ENCODE measurements at regions of chr5 and their contacts with region 1.

Region 1: DNA sequence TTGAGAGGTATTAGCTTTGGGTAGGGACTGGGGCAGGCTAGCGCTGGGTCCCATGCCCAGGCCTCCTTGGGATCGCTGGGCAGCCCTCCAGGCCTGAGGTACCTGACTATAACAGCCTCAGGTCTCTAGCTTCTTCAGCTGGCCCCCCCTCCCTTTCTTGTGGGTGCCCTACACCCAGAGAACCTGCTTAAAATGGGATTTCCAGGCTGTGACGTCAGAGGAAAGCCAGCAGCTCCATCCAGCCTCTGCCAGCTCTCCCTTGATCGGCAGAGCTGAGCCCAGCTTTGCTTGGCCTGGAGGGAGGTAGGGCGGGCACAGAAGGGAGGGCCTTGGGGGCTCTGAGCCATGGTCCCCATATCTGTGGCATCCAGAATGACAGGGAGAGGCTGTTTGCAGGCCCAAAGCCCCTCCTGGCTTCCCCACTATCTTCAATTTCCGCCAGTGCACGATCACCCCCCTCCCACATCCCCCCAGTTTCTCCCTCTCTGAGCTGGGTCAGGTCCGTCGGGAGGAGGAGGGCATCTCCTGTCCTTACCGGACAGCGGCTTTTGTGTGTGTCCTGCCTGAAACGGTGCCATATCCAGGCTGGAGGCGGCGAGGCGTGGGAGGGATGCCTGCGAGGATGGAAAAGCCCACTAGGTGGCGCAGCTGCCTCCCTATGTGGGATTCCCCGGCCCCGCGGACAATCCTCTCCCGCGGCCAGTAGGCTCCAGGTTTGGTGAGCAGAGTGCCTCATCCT is 10.8 kb downstream of the REEP2 start:
- H3K4me3 ChIP-seq: no peak overlapping the region
- H3K27ac ChIP-seq: no peak overlapping the region
- H3K4me1 ChIP-seq: 0 out of 2 replicates have a peak, but pooled peaks cover 2% of the 10 kb centered on the region
- CTCF ChIP-seq: peak; percentile 96

Region 2: DNA sequence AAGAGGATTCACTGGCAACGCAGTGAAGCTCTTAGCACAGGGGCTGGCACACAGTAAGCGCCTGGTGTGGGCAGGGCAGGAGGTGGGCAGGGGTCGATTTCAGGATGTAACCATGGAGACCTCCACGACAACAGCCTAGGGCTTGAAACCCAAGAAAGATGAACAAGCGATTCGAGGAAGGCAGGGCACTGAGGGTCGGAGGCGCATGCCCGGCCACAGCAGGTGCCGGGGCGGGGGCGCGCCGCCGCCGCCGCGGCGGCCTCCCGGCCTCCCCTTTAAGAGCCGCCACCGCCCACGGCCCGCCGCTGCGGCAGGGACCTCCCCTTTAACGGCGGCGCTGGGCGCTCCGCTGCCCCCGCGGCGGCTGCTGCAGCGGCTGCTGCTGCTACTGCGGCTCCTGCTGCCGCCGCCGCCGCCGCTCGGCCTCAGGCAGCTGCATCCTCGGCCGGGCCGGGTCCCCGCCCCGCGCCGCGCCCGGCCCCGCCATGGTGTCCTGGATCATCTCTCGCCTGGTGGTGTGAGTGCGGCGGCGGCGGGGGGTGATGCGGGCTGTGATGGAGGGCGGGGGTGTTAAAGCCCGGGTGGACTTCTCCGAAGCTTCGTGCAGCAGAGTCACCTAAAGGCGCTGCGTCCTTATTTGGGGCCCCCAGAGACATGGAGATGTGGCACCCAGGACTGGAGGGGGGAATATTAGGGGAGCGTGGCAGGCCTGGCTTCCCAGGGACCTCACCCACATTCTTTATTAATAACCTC is 10.8 kb before region 1 on chr5 and contains the start of gene REEP2:
- CTCF ChIA-PET with region 1: interaction called, 24 read pairs
- POLR2A ChIA-PET with region 1: no interaction called
- H3K4me3 ChIP-seq: peak within 1 kb of the TSS; percentile 60
- H3K27ac ChIP-seq: peak within 1 kb of the TSS; percentile 68; the same call in 1 of the 2 replicates
- H3K4me1 ChIP-seq: peaks cover 8% of the 10 kb centered on the region; the same call in 1 of the 2 replicates
- CTCF ChIP-seq: no peak

Region 3: GRCh38 chr5:138464008-138464387 is 14.3 kb after region 1 on chr5:
- CTCF ChIA-PET with region 1: interaction called, 57 read pairs
- POLR2A ChIA-PET with region 1: interaction called, 21 read pairs
- H3K4me3 ChIP-seq: peak overlapping the region; percentile 88
- H3K27ac ChIP-seq: peak overlapping the region; percentile 94
- H3K4me1 ChIP-seq: peaks cover 4% of the 10 kb centered on the region; the same call in 1 of the 2 replicates
- CTCF ChIP-seq: peak; percentile 97

Region 4: DNA sequence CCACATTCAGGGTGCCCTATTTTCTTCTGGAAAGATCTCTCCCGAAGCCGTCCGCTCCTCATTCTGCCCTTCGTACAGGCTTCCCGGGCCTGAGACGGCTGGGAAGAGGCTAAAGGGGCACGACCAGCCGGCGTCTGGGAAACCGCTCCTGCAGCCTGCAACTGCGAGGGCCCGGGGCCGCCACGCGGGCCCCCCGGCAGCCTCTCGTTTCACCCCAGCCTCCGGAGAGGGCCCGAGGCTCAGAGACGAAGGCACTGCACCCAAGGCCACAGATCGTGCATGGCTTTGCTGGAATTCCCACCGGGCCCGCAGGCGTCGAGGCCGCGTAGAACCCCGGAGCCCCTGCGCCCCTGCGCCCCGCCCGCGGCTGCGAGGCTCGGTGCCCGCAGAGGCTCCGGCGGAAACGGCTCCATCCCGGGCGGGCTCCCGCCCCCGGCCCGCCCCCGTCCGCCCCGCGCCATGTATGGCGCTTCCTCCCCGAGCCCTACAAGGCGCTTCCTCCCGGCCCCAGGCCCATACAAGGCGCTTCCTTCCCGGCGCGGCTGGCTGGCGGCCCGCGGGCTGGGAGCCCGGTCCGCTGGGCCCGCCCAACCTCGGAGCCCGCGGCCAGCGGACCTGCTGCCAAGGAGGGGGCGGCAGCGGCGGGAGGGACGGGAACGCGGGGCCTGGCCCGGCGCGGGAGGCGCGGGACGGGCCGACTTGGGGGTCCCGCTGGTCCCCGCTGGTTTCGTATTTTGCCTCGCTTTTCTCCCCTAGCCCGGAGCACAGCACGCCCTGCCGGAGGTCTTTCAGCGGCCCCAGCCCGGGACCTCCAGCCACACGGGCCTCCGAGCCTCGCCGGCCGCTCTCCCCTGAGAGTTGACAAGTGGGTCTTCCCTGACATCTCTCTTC is 42.2 kb after region 1 on chr5:
- CTCF ChIA-PET with region 1: interaction called, 38 read pairs
- POLR2A ChIA-PET with region 1: no interaction called
- H3K4me3 ChIP-seq: peak overlapping the region; percentile 47
- H3K27ac ChIP-seq: peak overlapping the region; percentile 64
- H3K4me1 ChIP-seq: peaks cover 8% of the 10 kb centered on the region
- CTCF ChIP-seq: peak; percentile 20; the same call in 1 of the 2 replicates

Region 5: DNA sequence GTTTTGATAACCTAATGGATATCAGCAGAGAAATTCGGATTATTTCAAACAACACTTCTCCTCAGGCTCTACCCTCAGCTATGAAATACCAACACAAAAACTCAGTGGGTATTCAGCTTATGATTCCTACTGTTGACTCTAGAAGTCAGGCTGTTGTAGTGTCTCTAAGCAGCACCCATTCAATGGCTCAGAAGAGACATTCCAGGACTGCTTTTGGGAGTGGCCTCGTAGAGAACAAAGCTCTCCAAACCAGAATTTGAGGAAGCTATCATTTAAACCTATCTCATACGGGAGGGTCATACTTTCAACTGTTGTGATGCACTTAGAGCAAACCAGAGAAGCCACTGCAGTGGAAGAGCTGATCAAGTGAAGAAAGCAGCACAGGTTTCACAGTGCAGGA is 59.3 kb after region 1 on chr5:
- CTCF ChIA-PET with region 1: interaction called, 110 read pairs
- POLR2A ChIA-PET with region 1: interaction called, 4 read pairs
- H3K4me3 ChIP-seq: no peak overlapping the region
- H3K27ac ChIP-seq: no peak overlapping the region
- H3K4me1 ChIP-seq: no peaks in the 10 kb centered on the region
- CTCF ChIP-seq: no peak

Region 6: DNA sequence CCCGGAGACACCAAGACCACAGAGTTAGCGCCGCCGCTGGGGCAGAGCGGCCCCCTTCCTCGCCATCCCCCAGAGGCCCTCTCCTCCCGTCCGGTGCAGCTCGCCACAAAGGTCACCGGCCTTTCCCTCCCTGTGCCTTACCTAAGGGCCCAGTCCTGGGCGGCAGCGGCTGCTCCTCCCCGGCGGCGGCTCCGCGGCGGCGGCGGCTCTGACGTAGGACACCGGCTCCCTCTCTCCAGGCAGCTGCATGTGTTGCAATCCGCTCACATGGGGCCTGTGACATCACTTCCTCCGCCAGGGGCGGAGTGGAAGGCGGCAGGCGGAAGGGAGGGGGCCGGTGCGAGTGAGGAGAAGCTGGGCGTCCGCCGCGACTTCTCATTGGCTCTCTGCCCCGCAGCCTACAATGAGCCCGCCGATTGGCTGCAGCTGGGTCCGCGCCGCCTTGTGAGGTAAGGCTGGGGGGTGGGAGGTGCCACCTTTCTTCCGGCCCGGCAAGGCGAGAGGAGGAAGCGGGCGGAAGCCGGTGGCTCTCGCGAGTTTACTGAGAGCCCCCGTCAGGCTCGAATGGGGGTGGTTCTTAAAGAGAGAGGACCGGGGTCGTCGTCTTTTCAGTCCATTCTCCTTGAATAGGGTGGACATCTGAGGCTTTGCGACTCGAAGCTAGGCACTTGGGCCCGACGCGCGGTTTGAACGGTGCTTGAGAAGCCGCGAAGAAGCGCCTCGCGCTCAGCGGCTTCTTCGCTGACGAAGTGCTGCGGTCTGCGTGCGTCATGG is 93.5 kb after region 1 on chr5 and contains the start of gene ETF1:
- CTCF ChIA-PET with region 1: interaction called, 45 read pairs
- POLR2A ChIA-PET with region 1: no interaction called
- H3K4me3 ChIP-seq: peak within 1 kb of the TSS; percentile 100
- H3K27ac ChIP-seq: peak within 1 kb of the TSS; percentile 77
- H3K4me1 ChIP-seq: peaks cover 11% of the 10 kb centered on the region
- CTCF ChIP-seq: no peak

Measured in HEK293 (cell line).